ENCODE measurements at regions of chr13 and their contacts with region 1.

Region 1: GRCh38 chr13:46126552-46127357 is 21.9 kb upstream of the CPB2 start:
- DNase-seq: peak; percentile 65 to 94 (median 81)
- H3K4me3 ChIP-seq: no peak overlapping the region
- H3K27ac ChIP-seq: no peak overlapping the region
- H3K4me1 ChIP-seq: no peaks in the 10 kb centered on the region
- H3K27me3 ChIP-seq: no peaks in the 10 kb centered on the region
- CTCF ChIP-seq: peak; percentile 66 to 92 (median 86)
- POLR2A ChIP-seq: no peak

Region 2: GRCh38 chr13:45817833-45818232 is 308.9 kb before region 1 on chr13:
- intact Hi-C with region 1: loop called (anchors 10 kb)
- DNase-seq: no peak
- H3K4me3 ChIP-seq: no peak overlapping the region
- H3K27ac ChIP-seq: no peak overlapping the region
- H3K4me1 ChIP-seq: no peaks in the 10 kb centered on the region
- H3K27me3 ChIP-seq: no peaks in the 10 kb centered on the region
- CTCF ChIP-seq: no peak
- POLR2A ChIP-seq: no peak

Measured in adrenal gland (tissue), 19 donors.